Activated naive CD4-positive, alpha-beta T cell treated with anti-CD3 and anti-CD28 coated beads for 36 hours (primary cell): ENCODE measurements at regions of chr3 and their contacts with region 1.

Region 1: DNA sequence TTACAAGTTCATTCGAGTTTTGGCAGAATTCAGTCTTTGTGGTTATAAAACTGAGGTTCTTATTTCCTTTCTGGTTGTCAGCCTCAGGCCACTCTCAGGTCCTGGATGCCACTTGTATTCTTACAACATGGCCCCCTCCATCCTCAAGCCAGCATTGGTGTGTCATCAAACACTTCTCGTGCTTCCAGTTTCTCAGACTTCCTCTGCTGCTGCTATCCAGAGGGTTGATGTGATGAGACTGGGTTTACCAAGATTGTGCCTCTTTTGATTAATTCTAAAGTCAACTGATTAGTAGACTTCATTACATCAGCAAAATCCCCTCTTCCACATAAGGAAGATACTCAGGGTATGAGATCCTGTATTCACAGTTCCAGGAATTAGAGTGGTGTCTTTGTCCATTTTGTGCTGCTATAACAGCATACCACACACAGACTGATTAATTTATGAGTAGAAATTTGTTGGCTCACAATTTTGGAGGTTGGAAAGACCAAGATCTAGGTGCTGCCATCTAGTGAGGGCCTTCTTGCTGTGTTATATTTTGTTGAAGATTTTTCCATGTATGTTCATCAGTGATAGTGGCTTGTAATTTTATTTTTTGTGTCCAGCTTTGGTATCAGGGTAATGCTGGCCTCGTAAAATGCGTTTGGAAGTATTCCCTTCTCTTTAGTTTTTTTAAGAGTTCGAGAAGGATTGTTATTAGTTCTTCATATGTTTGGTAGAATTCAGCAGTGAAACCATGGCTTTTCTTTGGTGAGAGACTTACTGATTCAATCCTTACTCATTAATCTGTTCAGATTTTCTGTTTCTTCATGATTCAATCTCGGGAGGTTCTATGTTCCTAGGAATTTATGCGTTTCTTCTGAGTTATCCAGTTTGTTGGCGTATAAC is 11.1 kb downstream of the LRCH3 start:
- DNase-seq: peak; percentile 59
- H3K4me3 Mint-ChIP-seq: no peak overlapping the region
- H3K27ac Mint-ChIP-seq: peak overlapping the region; percentile 46
- H3K4me1 Mint-ChIP-seq: peaks cover 53% of the 10 kb centered on the region
- H3K27me3 Mint-ChIP-seq: no peaks in the 10 kb centered on the region

Region 2: GRCh38 chr3:197682713-197683112 is 119.4 kb before region 1 on chr3:
- CTCF ChIA-PET with region 1: no interaction called
- intact Hi-C with region 1: loop called (anchors 5 kb)
- DNase-seq: peak; percentile 14
- H3K4me3 Mint-ChIP-seq: no peak overlapping the region
- H3K27ac Mint-ChIP-seq: no peak overlapping the region
- H3K4me1 Mint-ChIP-seq: peaks cover 2% of the 10 kb centered on the region
- H3K27me3 Mint-ChIP-seq: no peaks in the 10 kb centered on the region

Region 3: GRCh38 chr3:197749601-197750395 is 52.3 kb before region 1 on chr3 and contains the start of gene FYTTD1:
- CTCF ChIA-PET with region 1: interaction called, 3 read pairs
- intact Hi-C with region 1: loop called (anchors 1 kb)
- DNase-seq: peak; percentile 81
- H3K4me3 Mint-ChIP-seq: peak within 1 kb of the TSS; percentile 93
- H3K27ac Mint-ChIP-seq: peak within 1 kb of the TSS; percentile 83
- H3K4me1 Mint-ChIP-seq: peaks cover 30% of the 10 kb centered on the region
- H3K27me3 Mint-ChIP-seq: no peaks in the 10 kb centered on the region
- total RNA-seq, gene FYTTD1: 25.1 to 27.6 TPM

Region 4: GRCh38 chr3:197880491-197881269 is 78.5 kb after region 1 on chr3:
- CTCF ChIA-PET with region 1: no interaction called
- intact Hi-C with region 1: no loop called
- DNase-seq: no peak
- H3K4me3 Mint-ChIP-seq: no peak overlapping the region
- H3K27ac Mint-ChIP-seq: no peak overlapping the region
- H3K4me1 Mint-ChIP-seq: peaks cover 18% of the 10 kb centered on the region
- H3K27me3 Mint-ChIP-seq: no peaks in the 10 kb centered on the region